ENCODE measurements at regions of chr9 and their contacts with region 1.

Region 1: DNA sequence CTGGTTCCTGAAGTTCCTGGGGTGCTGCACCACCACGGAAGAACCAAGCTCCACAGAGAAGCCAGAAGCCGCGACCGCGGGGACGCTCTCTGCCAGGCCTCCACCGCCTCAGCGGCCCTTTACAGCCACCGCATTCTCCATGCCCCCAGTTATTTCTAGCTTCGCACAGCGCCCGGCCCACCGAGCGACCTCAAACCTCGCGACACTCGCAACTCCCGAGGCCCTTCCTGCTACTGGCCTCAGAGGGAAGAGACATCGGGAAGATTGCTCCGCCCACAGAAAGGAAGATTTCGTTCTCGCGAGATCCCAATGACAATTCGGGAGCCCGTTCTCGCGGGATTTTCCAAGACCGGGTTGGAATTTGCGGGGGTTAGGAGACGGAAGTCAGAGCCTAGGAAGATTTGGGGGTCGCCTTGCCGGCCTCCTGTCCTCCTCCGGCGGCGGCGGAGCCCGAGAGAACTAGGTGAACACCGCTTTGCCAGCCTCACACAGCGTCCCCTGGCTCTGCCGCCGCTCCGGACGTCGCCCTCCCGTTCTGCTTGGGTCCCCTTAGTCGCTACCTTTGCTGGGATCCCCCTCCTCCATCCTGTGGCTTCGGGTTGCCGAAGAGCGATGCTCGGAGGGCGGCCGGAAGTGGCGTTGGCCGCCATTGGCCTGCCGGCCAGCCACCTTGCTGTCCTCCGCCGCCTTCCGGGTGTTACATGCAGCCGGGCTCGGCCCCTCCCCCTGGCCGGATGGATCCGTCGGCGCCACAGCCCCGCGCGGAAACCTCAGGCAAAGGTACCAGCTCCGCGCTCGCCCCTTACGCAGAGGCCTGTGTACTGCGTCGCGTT is at the start of gene ERCC6L2:
- DNase-seq: peak; percentile 99
- H3K4me3 ChIP-seq: peak within 1 kb of the TSS in 1 of 3 experiments; percentile 71
- H3K27ac ChIP-seq: no peak within 1 kb of the TSS
- H3K4me1 ChIP-seq: peaks cover 23% of the 10 kb centered on the region
- H3K27me3 ChIP-seq: no peaks in the 10 kb centered on the region
- CTCF ChIP-seq: peak in 1 of 2 donors; percentile 0
- POLR2A ChIP-seq: peak; percentile 86
- total RNA-seq, gene ERCC6L2: 29.6 and 31.8 TPM in 2 replicates

Region 2: DNA sequence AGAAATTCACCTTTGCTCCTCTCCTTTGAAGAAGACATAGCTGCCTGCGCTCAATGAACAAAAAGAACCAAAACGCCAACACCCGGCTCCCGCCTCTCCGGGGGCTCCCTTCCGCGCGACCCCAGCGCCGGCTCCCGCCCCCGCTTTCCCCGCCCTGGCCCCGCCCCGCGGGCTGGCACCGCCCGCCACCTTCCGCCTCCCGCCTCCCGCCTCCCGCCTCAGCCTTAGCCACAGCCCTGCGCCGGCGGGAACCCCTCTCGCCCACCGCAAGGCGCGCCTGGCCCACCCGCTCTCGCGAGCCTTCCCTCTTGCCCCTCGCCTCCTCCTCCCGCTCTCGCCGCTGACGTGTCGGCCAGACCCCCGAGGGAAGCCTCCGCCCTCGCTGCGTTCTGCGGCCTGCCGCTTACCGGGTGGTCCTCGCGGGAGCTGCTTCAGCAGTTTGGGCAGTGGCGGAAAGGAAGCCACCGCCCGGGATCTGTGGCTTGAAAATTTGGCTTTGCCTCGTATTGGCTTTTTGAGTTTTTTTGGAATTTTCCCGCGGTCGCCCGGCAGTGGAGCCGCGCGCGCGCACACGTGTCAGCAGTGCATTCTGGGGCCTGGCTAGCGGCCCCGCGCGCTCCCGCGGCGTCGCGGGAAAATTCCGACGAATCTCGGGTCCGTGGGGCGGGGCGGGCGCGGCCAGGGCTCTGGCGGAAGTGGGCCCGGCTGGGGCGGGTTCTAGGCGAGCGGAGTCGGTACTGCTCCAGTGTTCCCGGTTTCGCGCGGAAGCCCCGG is 558.2 kb before region 1 on chr9 and contains the start of gene FANCC:
- CTCF ChIA-PET with region 1: no interaction called
- POLR2A ChIA-PET with region 1: no interaction called
- dilution Hi-C with region 1: no loop called
- intact Hi-C with region 1: loop called (anchors 1 kb)
- DNase-seq: peak; percentile 89
- H3K4me3 ChIP-seq: peak within 1 kb of the TSS; percentile 76 to 96 (median 88)
- H3K27ac ChIP-seq: peak within 1 kb of the TSS; percentile 98
- H3K4me1 ChIP-seq: peaks cover 14% of the 10 kb centered on the region
- H3K27me3 ChIP-seq: peaks cover 0 to 5% of the 10 kb centered on the region in 2 experiments
- CTCF ChIP-seq: no peak
- POLR2A ChIP-seq: peak; percentile 72
- total RNA-seq, gene FANCC: 13.1 and 14.0 TPM in 2 replicates

Region 3: DNA sequence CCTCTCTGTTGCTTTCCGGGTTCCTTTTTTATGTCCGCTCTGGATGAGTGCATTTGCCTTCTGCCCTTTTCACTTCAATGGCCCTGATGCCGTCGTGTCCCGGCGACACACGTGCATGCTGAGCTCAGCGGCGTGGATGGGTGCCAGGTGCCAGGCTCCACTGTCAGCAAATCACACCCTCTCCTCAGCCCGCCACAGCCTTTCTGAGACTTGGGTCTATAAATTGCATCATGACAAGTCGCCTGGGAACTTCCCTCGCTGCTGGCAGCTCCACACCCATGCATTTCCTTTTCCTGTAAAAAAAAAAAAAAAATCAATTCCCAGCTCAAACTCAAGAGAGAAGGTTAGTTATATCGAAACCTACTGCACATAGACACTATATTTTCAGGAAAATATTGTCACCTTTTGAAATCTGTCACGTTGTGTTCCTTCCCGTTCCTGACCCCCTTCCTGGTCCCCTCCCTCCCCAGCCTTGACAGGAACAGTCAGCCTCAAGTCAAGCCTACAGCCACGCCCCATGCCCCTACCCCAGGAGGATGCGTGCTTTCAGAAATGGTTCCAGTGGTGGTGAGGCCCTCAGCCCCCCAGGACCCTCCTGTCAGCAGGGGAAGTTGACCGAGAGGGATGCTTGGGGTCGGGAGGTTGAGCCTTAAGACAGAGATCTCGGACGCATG is 248.5 kb before region 1 on chr9:
- CTCF ChIA-PET with region 1: no interaction called
- POLR2A ChIA-PET with region 1: no interaction called
- dilution Hi-C with region 1: no loop called
- intact Hi-C with region 1: loop called (anchors 5 kb)
- DNase-seq: peak; percentile 71
- H3K4me3 ChIP-seq: peak overlapping the region in 1 of 3 experiments; percentile 18
- H3K27ac ChIP-seq: peak overlapping the region; percentile 82
- H3K4me1 ChIP-seq: peaks cover 23% of the 10 kb centered on the region
- H3K27me3 ChIP-seq: no peaks in the 10 kb centered on the region
- CTCF ChIP-seq: no peak
- POLR2A ChIP-seq: no peak

Region 4: GRCh38 chr9:95756986-95757385 is 118.5 kb before region 1 on chr9:
- CTCF ChIA-PET with region 1: interaction called, 4 read pairs
- POLR2A ChIA-PET with region 1: interaction called, 4 read pairs
- dilution Hi-C with region 1: no loop called
- intact Hi-C with region 1: loop called (anchors 1 kb)
- DNase-seq: peak; percentile 79
- H3K4me3 ChIP-seq: no peak overlapping the region
- H3K27ac ChIP-seq: no peak overlapping the region
- H3K4me1 ChIP-seq: peaks cover 5% of the 10 kb centered on the region
- H3K27me3 ChIP-seq: no peaks in the 10 kb centered on the region
- CTCF ChIP-seq: no peak
- POLR2A ChIP-seq: no peak

Region 5: DNA sequence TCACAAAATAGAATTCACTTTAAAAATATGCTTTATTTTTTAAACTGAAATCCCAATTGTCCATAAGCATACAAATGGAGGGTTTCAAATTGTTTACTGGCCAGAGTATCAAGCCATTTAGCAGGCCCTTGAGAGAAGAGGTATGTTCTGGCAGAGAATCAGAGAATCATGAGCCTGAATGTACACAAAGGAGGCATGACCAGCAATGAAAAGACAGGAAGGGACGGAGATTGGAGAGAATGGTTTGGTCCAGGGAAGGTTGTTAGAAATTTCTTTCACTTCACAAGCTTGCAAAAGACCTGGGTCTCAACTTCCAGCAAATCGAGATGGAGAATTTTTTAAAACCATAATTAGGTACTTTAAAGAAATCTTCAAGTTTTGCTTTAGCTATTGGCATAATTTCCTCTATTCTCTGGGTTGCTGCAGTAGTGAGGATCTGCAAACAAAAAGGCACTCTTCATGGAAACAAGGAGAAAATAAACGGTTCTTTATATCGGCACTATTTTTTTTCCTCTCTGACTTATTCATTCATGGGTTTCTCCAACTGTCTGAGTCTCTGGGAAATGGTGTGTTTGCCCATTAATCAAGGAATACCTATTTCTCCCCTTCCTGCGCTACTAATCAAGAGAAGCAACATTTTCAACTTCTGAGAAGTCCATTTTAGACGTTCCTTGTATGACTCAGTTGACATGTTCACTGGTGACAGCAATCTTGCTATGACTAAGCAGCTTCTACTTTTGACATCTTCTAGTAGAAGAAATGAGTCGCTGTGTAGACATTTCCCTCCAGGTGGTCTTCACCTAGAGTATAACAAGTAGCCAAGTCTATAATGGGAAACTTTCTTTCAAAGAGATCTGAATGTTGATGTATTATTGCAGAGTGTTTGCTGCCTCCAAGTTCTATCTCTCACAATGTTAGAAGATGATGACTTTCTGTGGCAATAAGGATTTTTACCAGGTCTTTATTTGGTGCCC is 23.2 kb before region 1 on chr9:
- CTCF ChIA-PET with region 1: interaction called, 3 read pairs
- POLR2A ChIA-PET with region 1: interaction called, 4 read pairs
- dilution Hi-C with region 1: no loop called
- intact Hi-C with region 1: loop called (anchors 2 kb)
- DNase-seq: peak; percentile 63
- H3K4me3 ChIP-seq: no peak overlapping the region
- H3K27ac ChIP-seq: peak overlapping the region; percentile 43
- H3K4me1 ChIP-seq: peaks cover 54% of the 10 kb centered on the region
- H3K27me3 ChIP-seq: no peaks in the 10 kb centered on the region
- CTCF ChIP-seq: no peak
- POLR2A ChIP-seq: no peak

Region 6: DNA sequence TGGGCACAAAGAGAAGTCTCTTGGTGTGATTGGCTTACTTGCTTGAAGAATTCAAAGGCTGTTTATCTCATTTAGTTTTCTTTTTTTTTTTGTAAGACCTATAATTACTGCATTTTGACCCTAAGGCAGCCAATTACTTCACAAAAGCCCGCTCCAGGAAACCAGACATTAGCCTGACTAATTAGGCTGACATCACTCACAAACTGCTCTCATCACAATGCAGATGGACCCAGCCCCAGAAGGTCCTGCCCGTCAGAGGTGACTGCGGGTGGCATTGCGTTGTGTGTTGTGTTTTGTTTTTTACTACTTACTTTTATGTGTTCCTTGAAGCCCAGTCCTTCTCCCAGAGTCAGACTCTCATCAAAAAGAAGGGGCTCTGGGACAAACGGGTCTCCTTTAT is 254.2 kb after region 1 on chr9:
- CTCF ChIA-PET with region 1: no interaction called
- POLR2A ChIA-PET with region 1: no interaction called
- dilution Hi-C with region 1: no loop called
- intact Hi-C with region 1: loop called (anchors 2 kb)
- DNase-seq: peak; percentile 86
- H3K4me3 ChIP-seq: peak overlapping the region in 1 of 3 experiments; percentile 35
- H3K27ac ChIP-seq: peak overlapping the region; percentile 77
- H3K4me1 ChIP-seq: peaks cover 33% of the 10 kb centered on the region
- H3K27me3 ChIP-seq: no peaks in the 10 kb centered on the region
- CTCF ChIP-seq: no peak
- POLR2A ChIP-seq: no peak

Measured in endothelial cell of umbilical vein (primary cell).